ENCODE measurements at regions of chr3 and their contacts with region 1.

Region 1: GRCh38 chr3:152268555-152269425 is at the start of gene MBNL1:
- DNase-seq: no peak
- ATAC-seq: peak; percentile 67
- H3K4me3 ChIP-seq: peak within 1 kb of the TSS; percentile 95
- H3K27ac ChIP-seq: peak within 1 kb of the TSS; percentile 90
- H3K4me1 ChIP-seq: peaks cover 10% of the 10 kb centered on the region
- H3K27me3 ChIP-seq: no peaks in the 10 kb centered on the region
- CTCF ChIP-seq: no peak
- EP300 ChIP-seq: no peak
- POLR2A ChIP-seq: peak; percentile 96
- RAD21 ChIP-seq: no peak
- polyA plus RNA-seq, gene MBNL1: 59.6 to 73.3 TPM

Region 2: DNA sequence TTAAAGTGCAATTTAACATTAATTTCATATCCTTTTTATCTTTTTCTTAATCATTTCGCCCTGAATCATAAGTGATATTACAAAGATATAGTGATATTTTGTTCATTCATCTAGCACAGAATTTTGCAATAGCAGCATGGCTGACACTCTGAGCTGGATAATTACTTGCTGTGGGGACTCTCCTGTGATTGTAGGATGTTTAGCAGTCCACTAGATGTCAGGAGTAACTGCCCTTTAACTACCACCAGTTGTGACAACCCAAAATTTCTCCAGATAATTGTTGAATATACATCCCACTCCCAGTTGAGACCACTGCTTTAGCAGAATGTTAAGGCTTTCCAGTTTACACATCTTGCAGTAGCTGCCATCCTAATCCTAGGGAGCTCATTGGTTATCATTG is 196.9 kb before region 1 on chr3:
- CTCF ChIA-PET with region 1: no interaction called
- POLR2A ChIA-PET with region 1: no interaction called
- RAD21 ChIA-PET with region 1: interaction called, 4 read pairs
- SMC1A ChIA-PET with region 1: interaction called, 4 read pairs
- in situ Hi-C with region 1: no loop called
- intact Hi-C with region 1: loop called (anchors 5 kb)
- DNase-seq: no peak
- ATAC-seq: peak; percentile 96
- H3K4me3 ChIP-seq: no peak overlapping the region
- H3K27ac ChIP-seq: no peak overlapping the region
- H3K4me1 ChIP-seq: no peaks in the 10 kb centered on the region
- H3K27me3 ChIP-seq: no peaks in the 10 kb centered on the region
- CTCF ChIP-seq: peak; percentile 47 to 64 (median 60)
- EP300 ChIP-seq: no peak
- POLR2A ChIP-seq: no peak
- RAD21 ChIP-seq: peak; percentile 53

Region 3: DNA sequence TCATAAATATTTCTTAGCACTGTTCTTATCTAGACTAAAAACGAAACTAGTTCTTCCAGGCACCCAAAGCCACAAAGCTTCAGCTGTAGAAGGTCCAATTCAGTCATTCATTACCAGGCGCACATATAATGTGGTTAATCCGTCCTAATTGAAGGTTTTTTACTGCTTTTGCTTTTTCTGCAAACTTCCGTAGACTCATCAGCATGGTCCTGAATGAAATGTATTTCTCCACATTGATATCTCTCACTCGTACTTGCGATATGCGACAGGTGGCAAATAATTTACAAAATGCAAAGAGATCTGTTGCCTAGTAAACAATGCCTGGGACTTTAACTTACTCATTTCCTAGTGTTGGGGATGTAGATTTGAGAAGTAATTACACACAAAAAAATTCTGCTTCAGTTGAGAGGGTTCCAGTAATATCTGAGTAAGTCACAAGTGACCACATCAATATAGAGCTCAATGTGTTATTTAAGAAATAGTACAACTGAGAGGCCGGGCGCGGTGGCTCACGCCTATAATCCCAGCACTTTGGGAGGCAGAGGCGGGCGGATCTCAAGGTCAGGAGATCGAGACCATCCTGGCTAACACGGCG is 75.0 kb before region 1 on chr3:
- CTCF ChIA-PET with region 1: interaction called, 9 read pairs
- POLR2A ChIA-PET with region 1: interaction called, 9 read pairs
- RAD21 ChIA-PET with region 1: interaction called, 26 read pairs
- SMC1A ChIA-PET with region 1: interaction called, 23 read pairs
- in situ Hi-C with region 1: no loop called
- intact Hi-C with region 1: loop called (anchors 2 kb)
- DNase-seq: no peak
- ATAC-seq: peak; percentile 67
- H3K4me3 ChIP-seq: peak overlapping the region; percentile 44; the same call in 1 of the 2 replicates
- H3K27ac ChIP-seq: peak overlapping the region; percentile 48; the same call in 1 of the 2 replicates
- H3K4me1 ChIP-seq: peaks cover 29% of the 10 kb centered on the region
- H3K27me3 ChIP-seq: no peaks in the 10 kb centered on the region
- CTCF ChIP-seq: no peak
- EP300 ChIP-seq: no peak
- POLR2A ChIP-seq: no peak
- RAD21 ChIP-seq: no peak; the same call in 1 of the 2 replicates

Region 4: GRCh38 chr3:152205097-152205593 is 63.6 kb before region 1 on chr3:
- CTCF ChIA-PET with region 1: interaction called, 3 read pairs
- POLR2A ChIA-PET with region 1: interaction called, 14 read pairs
- RAD21 ChIA-PET with region 1: interaction called, 26 read pairs
- SMC1A ChIA-PET with region 1: interaction called, 23 read pairs
- in situ Hi-C with region 1: no loop called
- intact Hi-C with region 1: no loop called
- DNase-seq: no peak
- ATAC-seq: peak; percentile 53
- H3K4me3 ChIP-seq: peak overlapping the region; percentile 30
- H3K27ac ChIP-seq: peak overlapping the region; percentile 82
- H3K4me1 ChIP-seq: peaks cover 11% of the 10 kb centered on the region; the same call in 1 of the 2 replicates
- H3K27me3 ChIP-seq: no peaks in the 10 kb centered on the region
- CTCF ChIP-seq: no peak
- EP300 ChIP-seq: no peak
- POLR2A ChIP-seq: no peak
- RAD21 ChIP-seq: no peak

Region 5: GRCh38 chr3:152258448-152259393 is 10.1 kb before region 1 on chr3:
- CTCF ChIA-PET with region 1: interaction called, 8 read pairs
- POLR2A ChIA-PET with region 1: interaction called, 40 read pairs
- RAD21 ChIA-PET with region 1: interaction called, 13 read pairs
- SMC1A ChIA-PET with region 1: interaction called, 51 read pairs
- in situ Hi-C with region 1: no loop called
- intact Hi-C with region 1: no loop called
- DNase-seq: no peak
- ATAC-seq: peak; percentile 75
- H3K4me3 ChIP-seq: no peak overlapping the region; the same call in 1 of the 2 replicates
- H3K27ac ChIP-seq: peak overlapping the region; percentile 11; the same call in 1 of the 2 replicates
- H3K4me1 ChIP-seq: peaks cover 27% of the 10 kb centered on the region
- H3K27me3 ChIP-seq: no peaks in the 10 kb centered on the region
- CTCF ChIP-seq: no peak
- EP300 ChIP-seq: no peak
- POLR2A ChIP-seq: no peak
- RAD21 ChIP-seq: no peak

Region 6: DNA sequence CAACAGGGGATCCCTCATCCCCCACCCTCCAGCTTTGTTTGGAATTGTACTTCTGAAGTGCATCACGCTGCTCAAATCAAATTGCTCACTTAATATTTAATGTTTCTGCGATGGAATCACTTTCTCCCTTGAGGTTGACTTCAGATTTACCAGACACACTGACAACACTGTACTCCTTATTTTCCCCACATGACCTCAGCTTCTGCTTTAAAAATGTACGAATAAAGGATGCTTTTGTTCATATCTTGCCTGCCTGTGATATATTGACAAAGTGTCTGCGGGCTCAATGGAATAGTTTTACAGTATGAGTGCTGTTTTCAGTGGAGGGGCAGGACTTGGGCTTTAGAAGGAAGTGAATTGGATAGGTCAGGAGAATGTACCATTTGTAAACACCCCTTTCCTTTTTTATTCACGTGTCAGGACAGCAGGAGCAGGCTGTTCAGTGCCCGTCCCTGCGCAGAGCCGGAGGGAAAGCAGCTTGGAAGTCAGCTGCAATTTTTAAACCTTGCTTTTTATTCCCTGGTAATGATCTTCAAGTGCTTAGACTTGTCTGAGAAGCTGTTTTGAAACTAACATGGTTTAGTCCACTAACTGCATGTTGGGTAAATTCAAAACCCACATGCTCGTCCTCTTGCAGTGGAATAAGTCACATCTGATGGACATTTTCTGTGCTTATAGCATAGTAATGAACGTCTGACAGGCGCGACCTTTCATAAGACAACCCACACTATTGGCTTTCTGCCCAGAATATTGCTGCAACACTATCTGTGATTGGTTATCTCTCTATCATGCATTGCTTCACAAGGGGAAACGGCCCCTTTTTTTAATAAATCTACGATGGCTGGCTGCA is 29.8 kb after region 1 on chr3:
- CTCF ChIA-PET with region 1: interaction called, 5 read pairs
- POLR2A ChIA-PET with region 1: interaction called, 7 read pairs
- RAD21 ChIA-PET with region 1: interaction called, 24 read pairs
- SMC1A ChIA-PET with region 1: interaction called, 77 read pairs
- in situ Hi-C with region 1: no loop called
- intact Hi-C with region 1: no loop called
- DNase-seq: peak; percentile 74
- ATAC-seq: peak; percentile 71
- H3K4me3 ChIP-seq: peak overlapping the region; percentile 8
- H3K27ac ChIP-seq: peak overlapping the region; percentile 56
- H3K4me1 ChIP-seq: peaks cover 40% of the 10 kb centered on the region
- H3K27me3 ChIP-seq: no peaks in the 10 kb centered on the region
- CTCF ChIP-seq: no peak
- EP300 ChIP-seq: no peak
- POLR2A ChIP-seq: no peak
- RAD21 ChIP-seq: no peak

Region 7: GRCh38 chr3:152376351-152377183 is 107.8 kb after region 1 on chr3:
- CTCF ChIA-PET with region 1: no interaction called
- POLR2A ChIA-PET with region 1: interaction called, 4 read pairs
- RAD21 ChIA-PET with region 1: interaction called, 6 read pairs
- SMC1A ChIA-PET with region 1: interaction called, 8 read pairs
- in situ Hi-C with region 1: no loop called
- intact Hi-C with region 1: loop called (anchors 2 kb)
- DNase-seq: peak; percentile 97
- ATAC-seq: peak; percentile 83
- H3K4me3 ChIP-seq: no peak overlapping the region; the same call in 1 of the 2 replicates
- H3K27ac ChIP-seq: peak overlapping the region; percentile 90
- H3K4me1 ChIP-seq: peaks cover 30% of the 10 kb centered on the region
- H3K27me3 ChIP-seq: no peaks in the 10 kb centered on the region
- CTCF ChIP-seq: no peak
- EP300 ChIP-seq: peak; percentile 95 to 99
- POLR2A ChIP-seq: peak; percentile 53
- RAD21 ChIP-seq: no peak

Region 8: GRCh38 chr3:152426393-152426792 is 157.6 kb after region 1 on chr3:
- CTCF ChIA-PET with region 1: no interaction called
- POLR2A ChIA-PET with region 1: no interaction called
- RAD21 ChIA-PET with region 1: no interaction called
- SMC1A ChIA-PET with region 1: no interaction called
- in situ Hi-C with region 1: no loop called
- intact Hi-C with region 1: no loop called
- DNase-seq: no peak
- ATAC-seq: peak; percentile 28; the same call in 2 of the 3 replicates
- H3K4me3 ChIP-seq: no peak overlapping the region
- H3K27ac ChIP-seq: no peak overlapping the region
- H3K4me1 ChIP-seq: no peaks in the 10 kb centered on the region
- H3K27me3 ChIP-seq: no peaks in the 10 kb centered on the region
- CTCF ChIP-seq: no peak
- EP300 ChIP-seq: no peak
- POLR2A ChIP-seq: no peak
- RAD21 ChIP-seq: no peak

Region 9: GRCh38 chr3:152564459-152564858 is 295.7 kb after region 1 on chr3:
- CTCF ChIA-PET with region 1: no interaction called
- POLR2A ChIA-PET with region 1: no interaction called
- RAD21 ChIA-PET with region 1: no interaction called
- SMC1A ChIA-PET with region 1: no interaction called
- in situ Hi-C with region 1: no loop called
- intact Hi-C with region 1: no loop called
- DNase-seq: no peak
- ATAC-seq: no peak
- H3K4me3 ChIP-seq: no peak overlapping the region
- H3K27ac ChIP-seq: no peak overlapping the region
- H3K4me1 ChIP-seq: no peaks in the 10 kb centered on the region
- H3K27me3 ChIP-seq: no peaks in the 10 kb centered on the region
- CTCF ChIP-seq: no peak
- EP300 ChIP-seq: no peak
- POLR2A ChIP-seq: no peak
- RAD21 ChIP-seq: no peak